Right lobe of liver (tissue), 6 donors: ENCODE measurements at regions of chr5 and their contacts with region 1.

Region 1: DNA sequence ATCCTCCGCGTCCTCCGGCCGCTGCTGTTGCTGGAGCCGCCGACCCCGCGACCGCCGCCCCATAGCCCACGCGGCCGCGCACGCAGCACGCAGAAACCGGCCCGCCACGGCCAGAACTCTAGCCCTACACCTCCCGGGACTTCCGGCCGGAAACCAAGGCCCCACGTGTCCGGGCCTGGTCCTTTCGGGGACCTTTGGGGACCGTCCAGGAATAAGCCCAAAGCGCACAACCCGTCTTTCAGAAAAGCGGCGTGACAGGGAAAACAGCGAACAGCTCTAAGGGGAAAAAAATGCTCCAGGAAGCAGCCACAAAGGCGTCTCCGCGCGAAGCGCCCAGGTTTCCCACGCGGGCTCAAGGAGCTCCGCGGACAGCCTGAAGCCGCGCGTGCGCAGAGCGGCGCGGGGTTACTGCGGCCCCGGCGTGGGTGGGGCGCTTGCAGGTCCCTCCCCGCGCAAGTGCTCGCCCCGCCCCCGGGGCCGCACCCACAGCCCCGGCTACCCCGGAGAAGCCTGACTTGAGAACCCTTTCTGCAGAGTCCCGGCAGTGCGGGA is at the starts of genes NSUN2 and SRD5A1:
- DNase-seq: peak; percentile 95 to 96 (median 96)
- ATAC-seq: peak; percentile 92 to 96 (median 92)
- H3K4me3 ChIP-seq: peak within 1 kb of the TSS; percentile 97 to 98 (median 97)
- H3K27ac ChIP-seq: peak within 1 kb of the TSS; percentile 94 to 99 (median 96)
- H3K4me1 ChIP-seq: peaks cover 0 to 40% (median 14%) of the 10 kb centered on the region in 4 donors
- H3K27me3 ChIP-seq: no peaks in the 10 kb centered on the region
- CTCF ChIP-seq: no peak
- POLR2A ChIP-seq: peak; percentile 65
- total RNA-seq, gene NSUN2: 24.6 to 42.5 (median 29.1) TPM
- total RNA-seq, gene SRD5A1: 13.5 to 87.6 (median 52.2) TPM

Region 2: GRCh38 chr5:6704361-6704851 is 71.4 kb after region 1 on chr5:
- intact Hi-C with region 1: loop called in 1 of 2 experiments (anchors 10 kb)
- DNase-seq: no peak
- ATAC-seq: peak in 2 of 4 donors; percentile 22 to 26
- H3K4me3 ChIP-seq: no peak overlapping the region
- H3K27ac ChIP-seq: no peak overlapping the region
- H3K4me1 ChIP-seq: no peaks in the 10 kb centered on the region
- H3K27me3 ChIP-seq: no peaks in the 10 kb centered on the region
- CTCF ChIP-seq: no peak
- POLR2A ChIP-seq: no peak

Region 3: GRCh38 chr5:6745706-6746222 is 112.8 kb after region 1 on chr5:
- intact Hi-C with region 1: loop called (anchors 10 kb)
- DNase-seq: no peak
- ATAC-seq: peak; percentile 86 to 95 (median 92)
- H3K4me3 ChIP-seq: no peak overlapping the region
- H3K27ac ChIP-seq: peak overlapping the region in 2 of 3 donors; percentile 6 to 65
- H3K4me1 ChIP-seq: peaks cover 0 to 6% (median 0%) of the 10 kb centered on the region in 4 donors
- H3K27me3 ChIP-seq: no peaks in the 10 kb centered on the region
- CTCF ChIP-seq: peak; percentile 79 to 90 (median 82)
- POLR2A ChIP-seq: no peak

Region 4: GRCh38 chr5:6788956-6789649 is 156.1 kb after region 1 on chr5:
- intact Hi-C with region 1: no loop called
- DNase-seq: no peak
- ATAC-seq: peak in 3 of 4 donors; percentile 26 to 64 (median 54)
- H3K4me3 ChIP-seq: no peak overlapping the region
- H3K27ac ChIP-seq: no peak overlapping the region
- H3K4me1 ChIP-seq: peaks cover 0 to 4% (median 0%) of the 10 kb centered on the region in 4 donors
- H3K27me3 ChIP-seq: no peaks in the 10 kb centered on the region
- CTCF ChIP-seq: no peak
- POLR2A ChIP-seq: no peak